ENCODE measurements at regions of chr20 and their contacts with region 1.

Region 1: DNA sequence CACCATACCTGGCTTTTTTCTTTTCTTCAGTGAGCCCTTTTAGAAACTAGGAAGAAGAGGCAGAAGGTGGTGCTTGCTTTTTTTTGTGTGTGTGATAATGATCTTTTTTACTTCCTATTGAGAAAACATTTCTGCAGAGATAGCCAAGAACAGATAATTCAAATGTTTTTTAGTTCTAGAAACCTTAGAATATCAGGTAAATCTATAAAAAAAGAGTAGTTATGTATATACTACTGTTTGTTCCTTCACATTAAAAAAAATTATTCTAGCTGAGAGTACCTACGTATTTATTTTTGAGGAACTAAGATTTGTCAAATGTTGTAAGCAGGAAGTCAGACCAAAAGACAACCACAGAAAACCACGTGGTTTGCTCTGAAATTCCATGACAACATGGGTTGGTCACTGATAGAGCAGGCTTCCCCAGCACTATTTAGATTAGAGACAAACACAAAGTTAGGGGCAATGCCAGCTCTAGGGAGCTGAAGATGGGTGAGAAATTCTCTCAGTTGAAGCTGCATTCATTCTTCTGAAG is 12.8 kb downstream of the STK4 start:
- DNase-seq: peak; percentile 65
- CTCF ChIP-seq: no peak

Region 2: DNA sequence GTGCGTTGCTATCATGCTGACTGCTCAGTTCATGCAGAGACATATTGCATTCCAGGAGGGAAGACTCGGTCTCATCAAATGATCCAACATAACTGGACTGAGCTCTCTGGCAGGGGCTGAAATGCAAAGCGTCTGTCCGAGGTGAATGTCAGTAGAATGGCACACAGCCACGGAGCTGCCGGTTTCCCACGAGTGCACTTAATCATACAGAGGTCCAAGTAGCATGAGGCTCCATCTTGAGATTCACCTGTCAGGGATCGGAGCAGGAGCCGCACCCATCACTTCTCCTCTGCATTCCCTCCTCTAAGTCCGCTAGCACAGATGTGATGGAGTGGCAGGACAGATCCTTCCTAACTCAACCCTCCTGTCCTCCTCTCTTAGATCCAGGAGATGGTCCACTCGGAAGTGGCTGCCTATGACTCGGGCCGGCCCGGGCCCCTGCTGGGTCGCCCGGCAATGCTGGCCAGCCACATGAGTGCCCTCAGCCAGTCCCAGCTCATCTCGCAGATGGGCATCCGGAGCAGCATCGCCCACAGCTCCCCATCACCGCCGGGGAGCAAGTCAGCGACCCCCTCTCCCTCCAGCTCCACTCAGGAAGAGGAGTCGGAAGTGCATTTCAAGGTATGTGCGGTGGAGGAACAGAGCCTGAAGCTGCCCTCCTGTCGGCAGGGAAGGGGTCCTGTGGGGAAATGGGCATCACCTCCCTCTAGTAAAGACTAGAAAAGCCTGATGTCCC is 928.1 kb before region 1 on chr20:
- CTCF ChIA-PET with region 1: no interaction called
- POLR2A ChIA-PET with region 1: no interaction called
- DNase-seq: no peak
- CTCF ChIP-seq: no peak

Region 3: GRCh38 chr20:44966030-44966961 is 12.9 kb before region 1 on chr20 and contains the start of gene STK4:
- CTCF ChIA-PET with region 1: interaction called, 11 read pairs
- POLR2A ChIA-PET with region 1: no interaction called
- DNase-seq: peak; percentile 90
- CTCF ChIP-seq: peak; percentile 72

Measured in GM10248 (cell line).